Sigmoid colon (tissue), 7 donors: ENCODE measurements at regions of chr15 and their contacts with region 1.

Region 1: DNA sequence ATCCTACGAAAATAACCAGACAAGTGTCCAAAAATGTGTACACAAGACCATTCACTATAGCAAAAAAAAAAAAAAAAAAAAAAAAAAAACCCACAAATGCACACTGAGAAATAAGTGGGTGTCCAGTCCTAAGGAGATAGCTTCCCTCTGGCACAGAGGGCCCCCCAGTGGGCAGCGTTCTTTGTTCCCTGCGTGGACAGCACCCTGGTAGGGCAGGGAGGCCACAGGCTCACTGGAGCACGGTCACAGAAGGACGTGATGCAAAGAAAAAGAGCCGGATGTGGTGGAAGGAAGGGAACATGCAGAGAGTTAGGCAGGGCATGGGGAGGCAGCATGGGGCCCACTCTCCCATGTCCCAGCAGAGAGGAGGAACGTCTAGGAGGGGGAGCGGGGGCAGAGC is 210.7 kb upstream of the NSMCE3 start:
- DNase-seq: no peak
- H3K4me3 ChIP-seq: no peak overlapping the region
- H3K27ac ChIP-seq: no peak overlapping the region
- H3K4me1 ChIP-seq: peaks cover 0 to 8% (median 7%) of the 10 kb centered on the region in 4 donors
- H3K27me3 ChIP-seq: no peaks in the 10 kb centered on the region
- CTCF ChIP-seq: no peak
- EP300 ChIP-seq: no peak
- POLR2A ChIP-seq: no peak

Region 2: GRCh38 chr15:29259233-29259632 is 221.0 kb before region 1 on chr15:
- intact Hi-C with region 1: no loop called
- DNase-seq: no peak
- H3K4me3 ChIP-seq: no peak overlapping the region
- H3K27ac ChIP-seq: no peak overlapping the region
- H3K4me1 ChIP-seq: no peaks in the 10 kb centered on the region
- H3K27me3 ChIP-seq: no peaks in the 10 kb centered on the region
- CTCF ChIP-seq: no peak
- EP300 ChIP-seq: no peak
- POLR2A ChIP-seq: no peak

Region 3: GRCh38 chr15:29382862-29383261 is 97.4 kb before region 1 on chr15:
- intact Hi-C with region 1: loop called (anchors 2 kb)
- DNase-seq: no peak
- H3K4me3 ChIP-seq: no peak overlapping the region
- H3K27ac ChIP-seq: no peak overlapping the region
- H3K4me1 ChIP-seq: no peaks in the 10 kb centered on the region
- H3K27me3 ChIP-seq: no peaks in the 10 kb centered on the region
- CTCF ChIP-seq: no peak
- EP300 ChIP-seq: no peak
- POLR2A ChIP-seq: no peak

Region 4: GRCh38 chr15:29556380-29556779 is 76.1 kb after region 1 on chr15:
- intact Hi-C with region 1: no loop called
- DNase-seq: no peak
- H3K4me3 ChIP-seq: no peak overlapping the region
- H3K27ac ChIP-seq: no peak overlapping the region
- H3K4me1 ChIP-seq: no peaks in the 10 kb centered on the region
- H3K27me3 ChIP-seq: no peaks in the 10 kb centered on the region
- CTCF ChIP-seq: no peak
- EP300 ChIP-seq: no peak
- POLR2A ChIP-seq: no peak

Region 5: GRCh38 chr15:29636140-29636539 is 155.9 kb after region 1 on chr15:
- intact Hi-C with region 1: no loop called
- DNase-seq: no peak
- H3K4me3 ChIP-seq: no peak overlapping the region
- H3K27ac ChIP-seq: no peak overlapping the region
- H3K4me1 ChIP-seq: no peaks in the 10 kb centered on the region
- H3K27me3 ChIP-seq: peaks cover 0 to 7% (median 0%) of the 10 kb centered on the region in 3 donors
- CTCF ChIP-seq: no peak
- EP300 ChIP-seq: no peak
- POLR2A ChIP-seq: no peak